ENCODE measurements at regions of chr5 and their contacts with region 1.

Region 1: GRCh38 chr5:158639881-158640592 is 459.7 kb downstream of the EBF1 start:
- DNase-seq: no peak
- H3K4me3 ChIP-seq: no peak overlapping the region
- H3K27ac ChIP-seq: no peak overlapping the region
- H3K4me1 ChIP-seq: no peaks in the 10 kb centered on the region
- H3K27me3 ChIP-seq: no peaks in the 10 kb centered on the region
- CTCF ChIP-seq: no peak

Region 2: GRCh38 chr5:158679221-158679641 is 39.2 kb after region 1 on chr5:
- intact Hi-C with region 1: loop called (anchors 2 kb)
- DNase-seq: no peak
- H3K4me3 ChIP-seq: no peak overlapping the region
- H3K27ac ChIP-seq: no peak overlapping the region
- H3K4me1 ChIP-seq: no peaks in the 10 kb centered on the region
- H3K27me3 ChIP-seq: no peaks in the 10 kb centered on the region
- CTCF ChIP-seq: no peak

Measured in ascending aorta (tissue), 2 donors.